Right cardiac atrium (tissue), 5 donors: ENCODE measurements at regions of chr2 and their contacts with region 1.

Region 1: GRCh38 chr2:70161069-70161534 is 29.7 kb downstream of the C2orf42 start:
- DNase-seq: no peak
- ATAC-seq: no peak
- H3K4me3 ChIP-seq: no peak overlapping the region
- H3K27ac ChIP-seq: no peak overlapping the region
- H3K4me1 ChIP-seq: no peaks in the 10 kb centered on the region
- H3K27me3 ChIP-seq: no peaks in the 10 kb centered on the region

Region 2: DNA sequence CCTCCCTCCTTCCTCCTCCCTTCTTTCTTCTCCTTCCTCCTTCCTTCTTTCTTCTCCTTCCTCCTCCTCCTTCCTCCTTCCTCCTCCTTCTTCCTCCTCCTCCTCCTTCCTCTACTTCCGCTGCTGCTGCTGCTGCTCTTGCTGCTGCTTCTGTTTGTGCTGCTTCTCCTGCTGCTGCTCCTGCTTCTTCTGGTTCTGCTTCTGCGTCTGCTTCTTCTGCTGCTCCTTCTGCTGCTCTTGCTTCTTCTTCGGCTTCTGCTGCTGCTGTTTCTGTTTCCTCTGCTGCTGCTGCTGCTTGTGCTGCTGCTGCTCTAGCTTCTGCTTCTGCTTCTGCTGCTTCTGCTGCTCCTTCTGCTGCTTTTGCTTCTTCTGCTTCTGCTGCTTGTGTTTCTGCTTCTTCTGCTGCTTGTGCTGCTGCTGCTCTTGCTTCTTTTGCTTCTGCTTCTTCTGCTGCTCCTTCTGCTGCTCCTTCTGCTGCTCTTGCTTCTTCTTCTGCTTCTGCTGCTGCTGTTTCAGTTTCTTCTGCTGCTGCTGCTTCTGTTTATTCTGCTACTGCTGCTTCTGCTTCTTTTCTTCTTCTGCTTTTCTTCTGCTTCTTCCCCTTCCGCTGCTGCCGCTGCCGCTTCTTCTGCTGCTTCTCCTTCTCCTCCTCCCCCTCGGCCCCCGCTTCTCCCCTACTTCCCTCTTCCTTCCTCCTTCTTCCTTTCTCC is 258.7 kb before region 1 on chr2:
- intact Hi-C with region 1: loop called in 1 of 4 experiments (anchors 10 kb)
- DNase-seq: peak in 2 of 3 donors; percentile 31 to 68
- ATAC-seq: no peak
- H3K4me3 ChIP-seq: no peak overlapping the region
- H3K27ac ChIP-seq: no peak overlapping the region
- H3K4me1 ChIP-seq: no peaks in the 10 kb centered on the region
- H3K27me3 ChIP-seq: no peaks in the 10 kb centered on the region